Panc1 (cell line): ENCODE measurements at regions of chr14 and their contacts with region 1.

Region 1: DNA sequence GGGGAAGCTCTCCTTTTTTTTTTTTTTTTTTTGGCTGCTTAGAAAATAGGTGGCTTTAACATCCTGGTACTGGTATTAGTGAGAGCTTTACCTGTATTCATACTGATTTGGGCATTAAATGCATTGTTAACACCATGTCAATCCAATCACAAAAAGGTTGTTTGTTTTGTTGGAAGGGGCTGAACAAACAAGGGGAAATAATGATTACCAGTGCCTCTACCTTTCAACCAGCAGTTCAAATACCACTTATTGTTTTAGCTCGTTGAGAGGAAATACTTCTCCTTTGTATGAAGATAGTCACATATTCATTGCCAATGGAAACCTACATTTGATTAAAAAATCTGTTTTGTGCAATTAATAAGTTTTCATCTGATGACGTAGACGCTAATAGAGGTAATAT is 72.9 kb downstream of the MIPOL1 start:
- DNase-seq: no peak
- ATAC-seq: no peak
- H3K4me3 ChIP-seq: no peak overlapping the region
- H3K27ac ChIP-seq: no peak overlapping the region
- H3K4me1 ChIP-seq: no peaks in the 10 kb centered on the region
- H3K27me3 ChIP-seq: no peaks in the 10 kb centered on the region
- CTCF ChIP-seq: no peak

Region 2: GRCh38 chr14:37480446-37481290 is 210.0 kb after region 1 on chr14:
- CTCF ChIA-PET with region 1: no interaction called
- POLR2A ChIA-PET with region 1: interaction called, 10 read pairs
- in situ Hi-C with region 1: no loop called
- intact Hi-C with region 1: no loop called
- DNase-seq: no peak
- ATAC-seq: no peak
- H3K4me3 ChIP-seq: no peak overlapping the region
- H3K27ac ChIP-seq: no peak overlapping the region
- H3K4me1 ChIP-seq: no peaks in the 10 kb centered on the region
- H3K27me3 ChIP-seq: no peaks in the 10 kb centered on the region
- CTCF ChIP-seq: no peak